IMR-90 (cell line): ENCODE measurements at regions of chr19 and their contacts with region 1.

Region 1: GRCh38 chr19:38711726-38712153 is 32.5 kb downstream of the CAPN12 start:
- DNase-seq: peak; percentile 97
- ATAC-seq: peak; percentile 94
- H3K4me3 ChIP-seq: no peak overlapping the region
- H3K27ac ChIP-seq: peak overlapping the region; percentile 63
- H3K4me1 ChIP-seq: peaks cover 45% of the 10 kb centered on the region
- H3K27me3 ChIP-seq: no peaks in the 10 kb centered on the region
- CTCF ChIP-seq: peak; percentile 39
- POLR2A ChIP-seq: no peak
- RAD21 ChIP-seq: peak; percentile 67

Region 2: GRCh38 chr19:38701455-38702063 is 10.2 kb before region 1 on chr19:
- CTCF ChIA-PET with region 1: no interaction called
- POLR2A ChIA-PET with region 1: no interaction called
- dilution Hi-C with region 1: no loop called
- in situ Hi-C with region 1: no loop called
- intact Hi-C with region 1: loop called (anchors 1 kb)
- DNase-seq: peak; percentile 21
- ATAC-seq: peak; percentile 73
- H3K4me3 ChIP-seq: no peak overlapping the region
- H3K27ac ChIP-seq: peak overlapping the region; percentile 63; the same call in 1 of the 2 replicates
- H3K4me1 ChIP-seq: peaks cover 13% of the 10 kb centered on the region
- H3K27me3 ChIP-seq: no peaks in the 10 kb centered on the region
- CTCF ChIP-seq: no peak
- POLR2A ChIP-seq: no peak
- RAD21 ChIP-seq: no peak

Region 3: DNA sequence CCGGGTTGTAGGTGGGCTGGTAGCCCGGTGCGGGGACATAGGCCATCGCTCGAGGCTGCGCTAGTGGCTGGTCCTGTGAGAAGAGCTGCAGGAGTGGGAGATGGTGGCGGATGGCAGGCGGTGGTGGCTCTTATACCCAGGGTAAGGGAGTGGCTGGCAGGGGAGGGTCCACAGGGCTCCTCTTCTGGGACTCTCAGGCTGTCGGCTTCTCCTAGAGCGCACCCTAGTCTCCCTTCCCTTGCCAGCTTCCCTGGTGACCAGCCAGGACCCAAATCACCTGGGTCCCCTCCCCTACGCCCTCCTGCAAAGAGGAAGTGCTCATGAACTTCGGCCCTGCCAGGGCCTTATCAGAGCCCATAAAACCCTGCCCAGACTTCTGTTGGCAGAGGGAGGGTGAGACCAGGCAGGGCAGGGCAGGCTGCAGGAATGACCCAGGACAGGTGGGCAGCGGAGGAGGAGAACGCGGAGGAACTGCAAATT is 101.1 kb after region 1 on chr19 and contains the start of gene LGALS4:
- CTCF ChIA-PET with region 1: no interaction called
- POLR2A ChIA-PET with region 1: no interaction called
- dilution Hi-C with region 1: no loop called
- in situ Hi-C with region 1: no loop called
- intact Hi-C with region 1: no loop called
- DNase-seq: no peak
- ATAC-seq: no peak
- H3K4me3 ChIP-seq: no peak within 1 kb of the TSS
- H3K27ac ChIP-seq: no peak within 1 kb of the TSS
- H3K4me1 ChIP-seq: no peaks in the 10 kb centered on the region
- H3K27me3 ChIP-seq: no peaks in the 10 kb centered on the region
- CTCF ChIP-seq: no peak
- POLR2A ChIP-seq: no peak
- RAD21 ChIP-seq: no peak
- total RNA-seq, gene LGALS4: not detected in 2 replicates